KBM-7 (cell line): ENCODE measurements at regions of chr14 and their contacts with region 1.

Region 1: GRCh38 chr14:81170104-81170828 is 50.5 kb downstream of the GTF2A1 start:
- DNase-seq: peak; percentile 94

Region 2: GRCh38 chr14:80987235-80988032 is 182.8 kb before region 1 on chr14:
- in situ Hi-C with region 1: loop called (anchors 25 kb)
- DNase-seq: peak; percentile 63